ENCODE measurements at regions of chr15 and their contacts with region 1.

Region 1: DNA sequence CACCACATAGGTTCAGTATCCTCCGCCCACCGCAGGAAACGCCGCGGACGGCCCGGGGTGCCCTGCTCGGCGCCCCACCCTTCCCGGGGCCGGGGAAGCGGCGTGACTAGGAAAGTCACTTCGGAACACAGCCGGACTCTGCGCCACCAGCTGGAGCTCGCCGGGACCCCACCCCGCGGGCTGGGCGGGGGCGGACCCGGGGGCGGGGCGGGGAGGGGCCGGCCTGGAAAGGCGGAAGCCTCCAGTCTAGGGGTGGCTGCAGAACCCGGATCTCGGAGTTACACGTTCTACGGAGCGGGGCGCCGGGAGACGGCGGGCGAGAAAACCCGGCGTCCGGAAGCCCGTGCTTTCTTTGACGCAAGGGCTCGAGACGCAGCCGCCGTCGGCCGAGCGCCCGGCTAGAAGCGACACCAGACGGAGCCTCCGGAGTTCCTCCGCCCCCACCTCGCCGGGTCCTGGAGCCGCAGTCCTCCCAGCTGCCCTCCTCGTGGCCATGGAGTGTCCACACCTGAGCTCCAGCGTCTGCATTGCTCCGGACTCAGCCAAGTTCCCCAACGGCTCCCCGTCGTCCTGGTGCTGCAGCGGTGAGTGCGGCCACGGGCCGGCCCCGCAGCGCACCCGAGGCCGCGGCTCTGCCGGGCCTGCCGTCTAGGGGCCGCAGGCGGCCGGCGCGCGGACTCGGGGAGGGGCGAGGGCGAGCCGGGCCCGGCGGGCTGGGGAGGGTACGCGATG is at the start of gene USP3:
- DNase-seq: peak; percentile 96
- H3K4me3 ChIP-seq: peak within 1 kb of the TSS; percentile 55 to 87 (median 85)
- H3K27ac ChIP-seq: peak within 1 kb of the TSS; percentile 92
- H3K4me1 ChIP-seq: peaks cover 61% of the 10 kb centered on the region
- H3K27me3 ChIP-seq: no peaks in the 10 kb centered on the region
- CTCF ChIP-seq: peak in 1 of 2 donors; percentile 32
- POLR2A ChIP-seq: peak; percentile 80
- total RNA-seq, gene USP3: 52.4 and 57.2 TPM in 2 replicates

Region 2: GRCh38 chr15:63048115-63048775 is 456.2 kb before region 1 on chr15:
- CTCF ChIA-PET with region 1: no interaction called
- POLR2A ChIA-PET with region 1: no interaction called
- dilution Hi-C with region 1: no loop called
- intact Hi-C with region 1: loop called (anchors 5 kb)
- DNase-seq: peak; percentile 94
- H3K4me3 ChIP-seq: peak overlapping the region; percentile 72 to 87 (median 78)
- H3K27ac ChIP-seq: peak overlapping the region; percentile 68
- H3K4me1 ChIP-seq: peaks cover 81% of the 10 kb centered on the region
- H3K27me3 ChIP-seq: no peaks in the 10 kb centered on the region
- CTCF ChIP-seq: peak; percentile 92 to 95
- POLR2A ChIP-seq: peak; percentile 66

Region 3: DNA sequence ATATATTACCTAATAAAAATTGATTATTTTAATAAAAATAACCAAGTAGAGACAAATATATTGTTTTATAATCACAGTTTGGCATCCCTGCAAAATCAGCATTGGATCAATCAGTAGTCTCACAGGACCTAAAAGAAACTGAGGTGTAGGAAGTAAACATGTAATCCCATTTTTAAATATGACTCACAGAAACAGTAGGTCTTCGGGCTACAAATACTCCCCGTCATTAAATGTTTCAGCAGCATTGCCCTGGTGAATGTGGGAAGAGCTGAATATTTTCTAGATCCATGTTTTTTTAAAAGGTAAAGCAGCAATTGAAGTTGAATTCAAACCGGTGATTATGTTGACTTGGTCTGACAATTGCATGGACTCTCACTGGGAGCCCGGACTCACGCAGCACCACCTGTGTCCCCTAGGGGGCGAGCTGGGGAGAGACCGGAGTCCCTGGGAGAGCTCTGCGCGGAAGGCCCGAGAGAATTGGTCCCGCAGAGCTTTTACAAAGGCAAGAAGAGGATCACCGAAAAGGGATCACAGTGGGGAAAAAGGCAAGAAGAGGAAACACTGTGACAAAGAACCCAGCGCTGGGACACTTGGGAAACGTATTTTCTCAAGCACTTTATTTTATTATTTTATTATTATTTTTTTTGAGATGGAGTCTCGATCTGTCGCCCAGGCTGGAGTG is 17.2 kb before region 1 on chr15:
- CTCF ChIA-PET with region 1: interaction called, 76 read pairs
- POLR2A ChIA-PET with region 1: no interaction called
- dilution Hi-C with region 1: no loop called
- intact Hi-C with region 1: loop called (anchors 1 kb)
- DNase-seq: peak; percentile 79
- H3K4me3 ChIP-seq: no peak overlapping the region
- H3K27ac ChIP-seq: no peak overlapping the region
- H3K4me1 ChIP-seq: peaks cover 14% of the 10 kb centered on the region
- H3K27me3 ChIP-seq: peaks cover 0 to 2% of the 10 kb centered on the region in 2 experiments
- CTCF ChIP-seq: peak; percentile 98
- POLR2A ChIP-seq: no peak

Region 4: DNA sequence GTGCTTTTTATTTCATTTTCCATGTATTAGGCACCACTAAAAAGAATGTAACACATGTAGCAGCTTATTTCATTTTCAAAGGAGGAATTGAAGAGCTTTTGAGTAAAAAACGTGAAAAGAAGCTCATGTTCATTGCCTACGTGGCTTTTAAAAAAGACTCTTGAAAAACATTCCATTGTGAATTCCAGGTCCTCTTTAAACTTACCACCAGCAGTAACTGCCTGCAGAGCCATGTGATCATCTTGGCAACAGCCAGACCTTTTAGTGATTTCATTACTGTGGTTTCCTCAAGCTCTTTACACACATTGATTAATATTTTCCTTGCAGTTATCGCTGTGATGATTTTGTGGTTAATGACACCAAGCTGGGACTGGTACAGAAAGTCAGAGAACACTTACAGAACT is 49.0 kb after region 1 on chr15:
- CTCF ChIA-PET with region 1: interaction called, 13 read pairs
- POLR2A ChIA-PET with region 1: no interaction called
- dilution Hi-C with region 1: no loop called
- intact Hi-C with region 1: loop called (anchors 2 kb)
- DNase-seq: peak; percentile 89
- H3K4me3 ChIP-seq: no peak overlapping the region
- H3K27ac ChIP-seq: peak overlapping the region; percentile 50
- H3K4me1 ChIP-seq: peaks cover 15% of the 10 kb centered on the region
- H3K27me3 ChIP-seq: no peaks in the 10 kb centered on the region
- CTCF ChIP-seq: no peak
- POLR2A ChIP-seq: no peak

Region 5: DNA sequence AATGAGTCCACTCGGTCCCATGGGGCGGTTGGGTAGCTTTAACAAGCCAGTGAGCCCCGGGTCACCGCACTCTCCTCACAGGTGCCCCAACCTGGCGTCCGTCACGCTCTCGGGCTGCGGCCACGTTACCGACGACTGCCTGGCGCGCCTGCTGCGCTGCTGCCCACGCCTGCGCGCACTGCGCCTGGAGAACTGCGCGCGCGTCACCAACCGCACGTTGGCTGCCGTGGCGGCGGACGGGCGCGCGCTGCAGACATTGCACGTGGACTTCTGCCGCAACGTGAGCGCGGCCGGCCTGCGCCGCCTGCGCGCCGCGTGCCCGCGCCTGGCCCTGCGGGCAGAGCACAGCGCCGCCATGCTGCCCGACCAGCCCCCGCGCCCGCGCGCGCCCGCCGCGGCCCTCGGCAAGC is 96.2 kb after region 1 on chr15:
- CTCF ChIA-PET with region 1: interaction called, 36 read pairs
- POLR2A ChIA-PET with region 1: no interaction called
- dilution Hi-C with region 1: no loop called
- intact Hi-C with region 1: loop called (anchors 1 kb)
- DNase-seq: peak; percentile 94
- H3K4me3 ChIP-seq: peak overlapping the region; percentile 56 to 82 (median 71)
- H3K27ac ChIP-seq: no peak overlapping the region
- H3K4me1 ChIP-seq: peaks cover 11% of the 10 kb centered on the region
- H3K27me3 ChIP-seq: no peaks in the 10 kb centered on the region
- CTCF ChIP-seq: peak in 1 of 2 donors; percentile 20
- POLR2A ChIP-seq: peak; percentile 95